Endothelial cell of umbilical vein (primary cell): ENCODE measurements at regions of chr19 and their contacts with region 1.

Region 1: GRCh38 chr19:43532962-43533545 is at the start of gene ZNF575:
- DNase-seq: peak; percentile 96
- H3K4me3 ChIP-seq: peak within 1 kb of the TSS; percentile 22 to 61 (median 31)
- H3K27ac ChIP-seq: peak within 1 kb of the TSS; percentile 32
- H3K4me1 ChIP-seq: peaks cover 10% of the 10 kb centered on the region
- H3K27me3 ChIP-seq: no peaks in the 10 kb centered on the region
- CTCF ChIP-seq: no peak
- POLR2A ChIP-seq: no peak
- total RNA-seq, gene ZNF575: 1.4 and 3.0 TPM in 2 replicates

Region 2: DNA sequence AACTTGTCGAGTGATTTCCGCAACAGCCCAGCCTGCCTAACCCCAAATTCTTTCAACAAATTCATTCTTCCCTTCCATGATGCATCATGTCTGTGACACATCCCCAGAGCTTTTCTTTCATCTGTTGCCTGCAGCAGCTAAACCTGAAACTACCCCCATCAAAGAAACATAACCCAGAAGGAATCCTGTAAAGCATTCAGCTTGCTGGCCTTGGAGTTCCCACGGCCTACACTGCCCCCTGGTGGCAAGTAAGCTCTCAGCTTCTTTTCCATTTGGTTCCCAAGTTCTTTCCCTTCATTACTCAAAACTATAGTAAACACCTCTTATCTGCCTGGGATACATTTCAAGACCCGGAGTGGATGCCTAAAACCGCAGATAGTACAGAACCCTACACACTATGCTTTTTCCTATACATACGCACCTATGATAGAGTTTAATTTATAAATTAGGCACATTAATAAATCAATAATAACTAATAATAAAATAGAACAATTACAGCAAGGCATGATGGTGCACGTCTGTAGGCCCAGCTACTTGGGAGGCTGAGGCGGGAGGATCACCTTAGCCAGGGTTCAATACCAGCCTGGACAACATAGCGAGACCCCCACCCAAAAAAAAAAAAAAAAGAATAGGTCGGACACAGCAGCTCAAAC is 13.5 kb before region 1 on chr19:
- CTCF ChIA-PET with region 1: interaction called, 18 read pairs
- POLR2A ChIA-PET with region 1: no interaction called
- dilution Hi-C with region 1: no loop called
- intact Hi-C with region 1: no loop called
- DNase-seq: peak; percentile 78
- H3K4me3 ChIP-seq: no peak overlapping the region
- H3K27ac ChIP-seq: no peak overlapping the region
- H3K4me1 ChIP-seq: no peaks in the 10 kb centered on the region
- H3K27me3 ChIP-seq: no peaks in the 10 kb centered on the region
- CTCF ChIP-seq: peak; percentile 80 to 87
- POLR2A ChIP-seq: no peak

Region 3: DNA sequence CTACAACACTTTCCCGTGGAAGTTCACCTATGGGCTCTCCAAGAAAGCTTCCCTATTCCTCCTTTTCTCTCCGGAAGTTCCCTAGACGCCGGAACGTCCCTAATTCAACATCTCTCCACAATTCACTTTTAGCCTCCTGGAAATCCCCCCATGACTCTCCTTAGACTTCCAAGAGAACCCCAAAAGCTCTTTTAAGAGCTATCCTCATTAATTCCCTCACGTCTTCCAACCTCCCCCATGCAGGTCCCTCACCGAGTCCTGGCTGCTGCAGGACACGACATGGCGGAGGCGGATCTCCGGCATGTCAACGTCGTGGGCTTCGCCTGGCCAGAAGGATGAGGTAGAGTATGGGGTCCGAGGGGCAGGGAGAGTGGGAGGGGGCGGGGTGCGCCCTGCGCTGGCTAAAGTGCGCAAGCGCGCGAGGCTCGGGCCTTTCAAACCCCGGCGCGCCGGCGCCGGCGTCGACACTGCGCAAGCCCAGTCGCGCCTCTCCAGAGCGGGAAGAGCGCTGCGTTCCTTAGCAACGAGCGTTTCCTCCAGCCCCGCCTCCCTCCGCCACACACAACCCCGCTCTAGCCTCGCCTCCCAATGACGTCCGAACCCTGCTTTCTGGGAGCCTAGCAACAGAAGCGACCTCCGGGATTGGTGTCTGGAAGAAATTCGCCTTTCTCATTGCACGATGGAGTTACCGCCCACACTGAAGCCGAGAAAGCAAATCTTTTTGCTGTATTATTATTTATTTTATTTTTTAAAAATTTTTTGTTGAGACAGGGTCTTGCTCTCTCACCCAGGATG is 42.3 kb after region 1 on chr19 and contains the starts of genes PINLYP and XRCC1:
- CTCF ChIA-PET with region 1: interaction called, 16 read pairs
- POLR2A ChIA-PET with region 1: no interaction called
- dilution Hi-C with region 1: no loop called
- intact Hi-C with region 1: loop called (anchors 1 kb)
- DNase-seq: peak; percentile 99
- H3K4me3 ChIP-seq: peak within 1 kb of the TSS; percentile 52 to 86 (median 79)
- H3K27ac ChIP-seq: peak within 1 kb of the TSS; percentile 73
- H3K4me1 ChIP-seq: peaks cover 7% of the 10 kb centered on the region
- H3K27me3 ChIP-seq: no peaks in the 10 kb centered on the region
- CTCF ChIP-seq: no peak
- POLR2A ChIP-seq: peak; percentile 62
- total RNA-seq, gene PINLYP: 2.6 and 5.5 TPM in 2 replicates
- total RNA-seq, gene XRCC1: 37.3 and 39.3 TPM in 2 replicates

Region 4: GRCh38 chr19:43619262-43620060 is 86.4 kb after region 1 on chr19 and contains the start of gene ZNF428:
- CTCF ChIA-PET with region 1: no interaction called
- POLR2A ChIA-PET with region 1: no interaction called
- dilution Hi-C with region 1: no loop called
- intact Hi-C with region 1: no loop called
- DNase-seq: peak; percentile 95
- H3K4me3 ChIP-seq: peak within 1 kb of the TSS; percentile 31 to 75 (median 47)
- H3K27ac ChIP-seq: peak within 1 kb of the TSS; percentile 88
- H3K4me1 ChIP-seq: peaks cover 12% of the 10 kb centered on the region
- H3K27me3 ChIP-seq: no peaks in the 10 kb centered on the region
- CTCF ChIP-seq: no peak
- POLR2A ChIP-seq: peak; percentile 48
- total RNA-seq, gene ZNF428: 51.8 and 56.2 TPM in 2 replicates

Region 5: DNA sequence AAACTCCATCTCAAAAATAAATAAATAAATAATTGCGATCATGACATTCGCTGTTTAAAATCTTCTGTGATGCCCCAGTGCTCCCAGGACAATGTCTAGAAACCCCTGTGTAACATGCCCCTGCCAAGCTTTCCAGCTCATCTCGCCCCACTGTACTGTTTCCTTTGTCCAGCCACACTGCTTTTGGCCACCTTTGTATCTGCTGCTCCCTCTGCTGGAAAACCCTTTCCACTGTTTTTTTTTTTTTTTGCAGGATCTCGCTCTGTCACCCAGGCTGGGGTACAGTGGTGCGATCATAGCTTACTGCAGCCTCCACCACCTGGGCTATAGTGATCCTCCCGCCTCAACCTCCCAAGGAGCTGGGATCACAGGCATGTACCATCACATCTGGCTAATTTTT is 129.4 kb after region 1 on chr19:
- CTCF ChIA-PET with region 1: interaction called, 10 read pairs
- POLR2A ChIA-PET with region 1: interaction called, 3 read pairs
- dilution Hi-C with region 1: no loop called
- intact Hi-C with region 1: no loop called
- DNase-seq: no peak
- H3K4me3 ChIP-seq: no peak overlapping the region
- H3K27ac ChIP-seq: no peak overlapping the region
- H3K4me1 ChIP-seq: peaks cover 23% of the 10 kb centered on the region
- H3K27me3 ChIP-seq: no peaks in the 10 kb centered on the region
- CTCF ChIP-seq: peak; percentile 28 to 39
- POLR2A ChIP-seq: no peak

Region 6: DNA sequence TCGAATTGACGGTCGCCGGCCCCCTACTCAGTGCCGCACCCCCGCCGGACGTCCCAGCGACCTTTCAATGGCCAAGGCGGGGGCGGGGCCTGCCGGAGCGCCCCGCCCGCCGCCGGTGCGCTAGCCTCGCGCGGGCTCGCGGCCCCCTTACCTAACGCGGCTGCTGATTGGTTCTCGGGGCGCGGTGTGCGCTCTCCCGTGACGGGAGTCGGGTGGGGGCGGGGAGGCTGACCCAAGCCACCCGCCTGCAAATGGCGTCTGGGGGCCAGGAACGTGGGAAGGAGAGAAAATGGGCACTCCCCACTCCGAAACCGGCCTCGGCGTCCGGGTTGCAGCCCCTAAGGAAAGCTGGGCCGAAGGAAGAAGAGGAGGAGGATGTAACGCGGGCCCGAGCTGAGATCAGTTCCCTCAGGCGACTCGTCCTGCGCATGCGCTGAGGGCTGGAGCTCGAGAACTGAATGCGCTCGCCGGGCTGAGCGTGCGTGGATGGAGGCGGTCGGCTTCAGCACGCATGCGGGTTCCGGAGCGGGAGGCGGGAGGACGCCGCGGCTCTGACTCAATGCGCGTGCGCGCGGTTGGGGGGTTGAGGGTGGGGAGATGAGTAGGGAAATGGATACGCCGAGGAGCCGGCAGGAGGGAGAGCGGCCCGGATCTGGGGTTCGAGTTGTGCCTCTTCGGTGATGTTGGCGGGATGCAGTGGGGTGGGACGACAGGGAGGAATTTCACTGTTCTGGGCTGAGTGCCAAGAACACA is 221.6 kb after region 1 on chr19 and contains the start of gene SMG9:
- CTCF ChIA-PET with region 1: no interaction called
- POLR2A ChIA-PET with region 1: no interaction called
- dilution Hi-C with region 1: no loop called
- intact Hi-C with region 1: loop called (anchors 1 kb)
- DNase-seq: peak; percentile 99
- H3K4me3 ChIP-seq: peak within 1 kb of the TSS; percentile 67 to 92 (median 74)
- H3K27ac ChIP-seq: peak within 1 kb of the TSS; percentile 97
- H3K4me1 ChIP-seq: peaks cover 34% of the 10 kb centered on the region
- H3K27me3 ChIP-seq: no peaks in the 10 kb centered on the region
- CTCF ChIP-seq: no peak
- POLR2A ChIP-seq: peak; percentile 50
- total RNA-seq, gene SMG9: 45.0 and 53.3 TPM in 2 replicates